ENCODE measurements at regions of chr6 and their contacts with region 1.

Region 1: GRCh38 chr6:124334359-124334758 is 530.7 kb downstream of the NKAIN2 start:
- DNase-seq: peak; percentile 4 to 23
- H3K4me3 ChIP-seq: no peak overlapping the region
- H3K27ac ChIP-seq: no peak overlapping the region
- H3K4me1 ChIP-seq: no peaks in the 10 kb centered on the region
- H3K27me3 ChIP-seq: no peaks in the 10 kb centered on the region
- CTCF ChIP-seq: peak in 1 of 6 experiments; percentile 28
- POLR2A ChIP-seq: no peak

Region 2: DNA sequence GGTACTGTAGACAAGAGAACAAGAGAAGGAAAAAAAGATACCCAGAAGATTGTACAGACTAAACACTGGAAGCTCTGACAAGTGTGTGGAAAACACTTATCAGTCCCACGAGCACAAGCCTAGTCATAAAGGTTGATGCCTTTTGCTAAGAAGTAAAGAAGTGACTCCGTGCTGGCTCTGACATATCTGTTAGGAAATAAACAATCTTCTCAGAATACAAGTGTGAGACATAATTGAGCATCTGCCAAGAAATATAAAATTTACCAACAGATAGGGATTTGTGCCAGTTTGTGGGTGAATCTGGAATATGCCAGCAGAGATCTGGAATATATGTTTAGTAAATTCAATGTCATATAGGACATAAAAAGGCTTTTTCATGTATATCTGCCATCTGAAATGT is 369.2 kb after region 1 on chr6:
- intact Hi-C with region 1: loop called (anchors 10 kb)
- DNase-seq: no peak
- H3K4me3 ChIP-seq: no peak overlapping the region
- H3K27ac ChIP-seq: no peak overlapping the region
- H3K4me1 ChIP-seq: no peaks in the 10 kb centered on the region
- H3K27me3 ChIP-seq: no peaks in the 10 kb centered on the region
- CTCF ChIP-seq: no peak
- POLR2A ChIP-seq: no peak

Measured in thyroid gland (tissue), 4 donors.